ENCODE measurements at regions of chr22 and their contacts with region 1.

Region 1: DNA sequence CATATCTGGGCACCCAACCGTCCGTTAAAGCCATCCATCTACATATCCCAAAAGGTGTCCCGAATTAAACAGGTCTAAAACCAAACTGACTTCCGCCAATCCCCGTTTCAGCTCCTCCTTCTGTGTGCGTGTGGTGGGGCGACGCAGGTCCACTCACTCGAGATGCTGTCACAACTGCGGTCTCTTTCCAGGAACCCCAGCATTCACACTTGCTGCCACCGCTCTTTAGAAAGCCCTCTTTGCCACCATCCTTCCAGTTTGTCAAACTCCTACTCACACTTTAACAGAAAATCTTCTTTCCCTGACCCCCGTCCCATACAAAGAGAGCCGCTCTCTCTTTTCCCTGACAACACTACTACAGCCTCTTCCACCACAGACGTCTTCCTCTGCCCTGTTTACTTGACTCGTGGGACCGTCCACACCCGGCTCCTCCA is 467 bp downstream of the ESS2 start:
- DNase-seq: no peak
- ATAC-seq: no peak
- H3K4me3 ChIP-seq: peak overlapping the region; percentile 78 to 96 (median 87)
- H3K4me3 Mint-ChIP-seq: peak overlapping the region; percentile 99
- H3K27ac ChIP-seq: peak overlapping the region; percentile 85 to 94
- H3K27ac Mint-ChIP-seq: peak overlapping the region; percentile 97
- H3K4me1 ChIP-seq: peaks cover 9 to 17% of the 10 kb centered on the region in 2 donors
- H3K4me1 Mint-ChIP-seq: peaks cover 16% of the 10 kb centered on the region
- H3K27me3 ChIP-seq: peaks cover 0 to 17% (median 8%) of the 10 kb centered on the region in 4 experiments
- H3K27me3 Mint-ChIP-seq: peaks cover 9% of the 10 kb centered on the region
- CTCF ChIP-seq: no peak

Region 2: DNA sequence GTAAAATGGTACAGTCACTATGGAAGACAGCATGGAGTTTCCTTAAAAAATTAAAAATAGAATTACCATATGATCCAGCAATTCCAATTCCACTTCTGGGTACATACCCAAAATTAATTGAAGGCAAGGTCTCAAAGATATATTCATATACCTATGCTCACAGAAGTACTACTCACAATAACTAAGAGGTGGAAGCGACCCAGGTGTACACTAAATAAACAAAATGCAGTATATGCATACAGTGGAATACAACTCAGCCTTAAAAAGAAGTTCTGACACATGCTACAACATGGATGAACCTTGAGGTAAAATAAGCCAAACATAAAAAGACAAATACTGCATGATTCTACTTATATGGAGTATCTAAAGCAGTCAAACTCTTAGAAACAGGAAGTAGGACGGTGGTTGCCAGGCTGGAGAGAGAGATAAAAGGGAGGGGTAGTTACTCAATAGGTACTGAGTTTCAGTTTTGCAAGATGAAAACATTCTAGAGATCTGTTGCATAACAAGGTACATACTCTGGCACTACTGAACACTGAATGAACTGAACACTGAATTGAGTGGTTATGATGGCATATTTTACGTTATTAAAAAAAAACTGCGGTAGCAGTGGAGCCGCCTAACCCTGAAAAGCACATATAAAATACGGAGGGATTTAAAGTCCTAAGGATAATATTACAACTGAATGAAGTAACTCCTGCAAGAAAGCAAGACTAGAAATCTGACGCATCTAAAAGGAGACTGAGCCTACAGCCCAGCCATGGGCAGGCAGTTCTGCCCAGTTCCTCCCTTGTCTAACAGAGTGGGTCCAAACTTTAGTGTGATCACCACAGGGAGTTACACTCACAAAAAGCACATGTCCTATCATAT is 34.6 kb before region 1 on chr22:
- CTCF ChIA-PET with region 1: interaction called, 6 read pairs
- POLR2A ChIA-PET with region 1: no interaction called
- intact Hi-C with region 1: loop called (anchors 5 kb)
- DNase-seq: peak; percentile 78
- ATAC-seq: peak; percentile 95
- H3K4me3 ChIP-seq: peak overlapping the region in 3 of 5 experiments; percentile 11 to 52 (median 35)
- H3K4me3 Mint-ChIP-seq: peak overlapping the region; percentile 70
- H3K27ac ChIP-seq: peak overlapping the region; percentile 55 to 65
- H3K27ac Mint-ChIP-seq: peak overlapping the region; percentile 85
- H3K4me1 ChIP-seq: peaks cover 25 to 47% of the 10 kb centered on the region in 2 donors
- H3K4me1 Mint-ChIP-seq: peaks cover 59% of the 10 kb centered on the region
- H3K27me3 ChIP-seq: no peaks in the 10 kb centered on the region
- H3K27me3 Mint-ChIP-seq: no peaks in the 10 kb centered on the region
- CTCF ChIP-seq: no peak

Region 3: DNA sequence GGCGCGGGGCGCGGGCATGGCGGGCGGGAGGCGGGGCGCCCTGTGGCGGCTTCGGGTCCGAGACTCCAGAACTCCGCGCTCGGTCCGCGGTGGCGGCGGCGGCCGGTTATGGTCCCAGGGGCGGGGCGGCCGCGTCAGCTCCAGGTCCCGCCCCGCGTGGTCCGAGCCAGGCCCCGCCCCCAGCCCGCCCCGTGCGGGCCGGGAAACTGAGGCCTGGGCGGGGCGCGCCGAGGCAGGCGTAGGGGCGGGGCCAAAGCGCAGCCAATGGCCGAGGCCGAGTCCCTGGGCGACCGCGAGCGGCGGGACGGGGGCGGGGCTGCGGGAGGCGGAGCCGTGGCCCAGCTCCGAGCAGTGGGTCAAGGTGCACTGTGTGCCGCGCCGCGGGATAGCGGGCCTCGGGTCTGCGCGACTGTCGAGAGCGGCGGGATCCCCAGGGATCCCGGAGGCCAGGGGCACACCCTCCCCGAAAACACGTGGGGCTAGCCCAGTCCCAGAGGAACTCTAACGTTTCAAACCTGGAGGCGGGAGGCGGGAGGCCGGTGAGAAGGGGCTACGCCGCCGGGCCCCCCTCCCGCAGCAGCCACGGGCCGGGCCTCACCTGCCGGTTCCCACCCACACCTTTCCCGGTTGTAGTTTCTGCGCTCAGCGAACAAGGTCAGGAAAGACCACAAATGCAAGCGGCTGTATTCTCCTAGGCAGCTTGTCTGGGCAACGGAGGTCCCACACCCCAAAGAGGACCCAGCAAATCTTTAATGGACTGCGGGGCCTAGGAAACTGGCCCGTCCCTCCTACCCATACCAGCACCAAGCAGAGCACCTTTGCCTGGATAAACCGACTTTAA is 34.9 kb after region 1 on chr22 and contains the start of gene SLC25A1:
- CTCF ChIA-PET with region 1: interaction called, 24 read pairs
- POLR2A ChIA-PET with region 1: interaction called, 6 read pairs
- intact Hi-C with region 1: loop called (anchors 1 kb)
- DNase-seq: peak; percentile 86
- ATAC-seq: peak; percentile 80
- H3K4me3 ChIP-seq: peak within 1 kb of the TSS; percentile 18 to 76 (median 66)
- H3K4me3 Mint-ChIP-seq: peak within 1 kb of the TSS; percentile 87
- H3K27ac ChIP-seq: peak within 1 kb of the TSS in 1 of 2 donors; percentile 58
- H3K27ac Mint-ChIP-seq: peak within 1 kb of the TSS; percentile 89
- H3K4me1 ChIP-seq: peaks cover 20 to 40% of the 10 kb centered on the region in 2 donors
- H3K4me1 Mint-ChIP-seq: peaks cover 35% of the 10 kb centered on the region
- H3K27me3 ChIP-seq: no peaks in the 10 kb centered on the region
- H3K27me3 Mint-ChIP-seq: no peaks in the 10 kb centered on the region
- CTCF ChIP-seq: no peak
- total RNA-seq, gene SLC25A1: 47.7 and 48.4 TPM in 2 replicates

Region 4: GRCh38 chr22:19223617-19224016 is 79.6 kb after region 1 on chr22:
- CTCF ChIA-PET with region 1: no interaction called
- POLR2A ChIA-PET with region 1: no interaction called
- intact Hi-C with region 1: no loop called
- DNase-seq: no peak
- ATAC-seq: no peak
- H3K4me3 ChIP-seq: no peak overlapping the region
- H3K4me3 Mint-ChIP-seq: no peak overlapping the region
- H3K27ac ChIP-seq: no peak overlapping the region
- H3K27ac Mint-ChIP-seq: no peak overlapping the region
- H3K4me1 ChIP-seq: no peaks in the 10 kb centered on the region
- H3K4me1 Mint-ChIP-seq: no peaks in the 10 kb centered on the region
- H3K27me3 ChIP-seq: no peaks in the 10 kb centered on the region
- H3K27me3 Mint-ChIP-seq: no peaks in the 10 kb centered on the region
- CTCF ChIP-seq: no peak

Region 5: GRCh38 chr22:19361501-19362103 is 217.6 kb after region 1 on chr22:
- CTCF ChIA-PET with region 1: no interaction called
- POLR2A ChIA-PET with region 1: no interaction called
- intact Hi-C with region 1: loop called (anchors 1 kb)
- DNase-seq: peak; percentile 92
- ATAC-seq: peak; percentile 95
- H3K4me3 ChIP-seq: peak overlapping the region; percentile 1 to 65 (median 47)
- H3K4me3 Mint-ChIP-seq: peak overlapping the region; percentile 85
- H3K27ac ChIP-seq: peak overlapping the region; percentile 98 to 100
- H3K27ac Mint-ChIP-seq: peak overlapping the region; percentile 95
- H3K4me1 ChIP-seq: peaks cover 64 to 75% of the 10 kb centered on the region in 2 donors
- H3K4me1 Mint-ChIP-seq: peaks cover 69% of the 10 kb centered on the region
- H3K27me3 ChIP-seq: no peaks in the 10 kb centered on the region
- H3K27me3 Mint-ChIP-seq: no peaks in the 10 kb centered on the region
- CTCF ChIP-seq: no peak

Region 6: GRCh38 chr22:19619144-19620009 is 475.4 kb after region 1 on chr22:
- CTCF ChIA-PET with region 1: no interaction called
- POLR2A ChIA-PET with region 1: no interaction called
- intact Hi-C with region 1: loop called (anchors 1 kb)
- DNase-seq: peak; percentile 59
- ATAC-seq: peak; percentile 31
- H3K4me3 ChIP-seq: peak overlapping the region in 1 of 5 experiments; percentile 23
- H3K4me3 Mint-ChIP-seq: peak overlapping the region; percentile 57
- H3K27ac ChIP-seq: no peak overlapping the region
- H3K27ac Mint-ChIP-seq: peak overlapping the region; percentile 28
- H3K4me1 ChIP-seq: peaks cover 35 to 59% of the 10 kb centered on the region in 2 donors
- H3K4me1 Mint-ChIP-seq: peaks cover 52% of the 10 kb centered on the region
- H3K27me3 ChIP-seq: peaks cover 0 to 22% (median 5%) of the 10 kb centered on the region in 4 experiments
- H3K27me3 Mint-ChIP-seq: peaks cover 30% of the 10 kb centered on the region
- CTCF ChIP-seq: no peak

Measured in B cell (primary cell).